ENCODE measurements at regions of chr2 and their contacts with region 1.

Region 1: GRCh38 chr2:9867881-9868280 is 24.6 kb downstream of the TAF1B start:
- DNase-seq: no peak
- ATAC-seq: no peak
- H3K4me3 ChIP-seq: no peak overlapping the region
- H3K27ac ChIP-seq: no peak overlapping the region
- H3K4me1 ChIP-seq: no peaks in the 10 kb centered on the region
- H3K27me3 ChIP-seq: no peaks in the 10 kb centered on the region
- CTCF ChIP-seq: no peak
- EP300 ChIP-seq: no peak
- POLR2A ChIP-seq: no peak
- RAD21 ChIP-seq: no peak

Region 2: DNA sequence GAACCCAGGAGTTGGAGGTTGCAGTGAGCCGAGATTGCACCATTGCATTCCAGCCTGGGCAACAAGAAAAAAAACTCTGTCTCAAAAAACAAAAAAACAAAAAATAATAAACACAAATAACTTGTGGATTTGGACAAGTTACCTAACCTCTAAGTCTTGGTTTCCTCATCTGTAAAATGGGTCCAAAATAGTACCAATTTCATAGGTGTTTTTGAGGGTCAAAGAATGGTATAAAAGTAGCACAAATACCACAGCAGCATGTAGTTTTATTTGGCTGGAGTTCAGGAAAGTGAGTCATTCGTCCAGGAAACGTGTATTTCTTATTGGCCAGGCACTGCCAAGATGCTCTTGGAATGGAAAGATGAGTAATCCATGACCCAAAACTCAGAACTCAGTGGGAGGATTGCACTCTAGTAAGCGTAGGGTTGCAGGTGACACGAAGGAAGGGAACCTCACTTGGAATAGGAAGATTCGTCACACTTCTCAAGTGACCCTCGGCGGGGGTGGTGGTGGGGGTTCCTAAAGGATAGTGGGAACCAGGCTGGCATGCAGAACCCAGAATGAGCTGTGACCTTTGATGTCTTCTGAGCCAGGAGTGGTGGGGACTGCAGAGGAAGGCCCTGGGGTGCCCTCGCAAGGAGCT is 108.0 kb after region 1 on chr2:
- CTCF ChIA-PET with region 1: no interaction called
- POLR2A ChIA-PET with region 1: no interaction called
- in situ Hi-C with region 1: no loop called
- intact Hi-C with region 1: no loop called
- DNase-seq: no peak
- ATAC-seq: no peak
- H3K4me3 ChIP-seq: no peak overlapping the region
- H3K27ac ChIP-seq: no peak overlapping the region
- H3K4me1 ChIP-seq: no peaks in the 10 kb centered on the region
- H3K27me3 ChIP-seq: no peaks in the 10 kb centered on the region
- CTCF ChIP-seq: no peak
- EP300 ChIP-seq: no peak
- POLR2A ChIP-seq: no peak
- RAD21 ChIP-seq: no peak

Region 3: DNA sequence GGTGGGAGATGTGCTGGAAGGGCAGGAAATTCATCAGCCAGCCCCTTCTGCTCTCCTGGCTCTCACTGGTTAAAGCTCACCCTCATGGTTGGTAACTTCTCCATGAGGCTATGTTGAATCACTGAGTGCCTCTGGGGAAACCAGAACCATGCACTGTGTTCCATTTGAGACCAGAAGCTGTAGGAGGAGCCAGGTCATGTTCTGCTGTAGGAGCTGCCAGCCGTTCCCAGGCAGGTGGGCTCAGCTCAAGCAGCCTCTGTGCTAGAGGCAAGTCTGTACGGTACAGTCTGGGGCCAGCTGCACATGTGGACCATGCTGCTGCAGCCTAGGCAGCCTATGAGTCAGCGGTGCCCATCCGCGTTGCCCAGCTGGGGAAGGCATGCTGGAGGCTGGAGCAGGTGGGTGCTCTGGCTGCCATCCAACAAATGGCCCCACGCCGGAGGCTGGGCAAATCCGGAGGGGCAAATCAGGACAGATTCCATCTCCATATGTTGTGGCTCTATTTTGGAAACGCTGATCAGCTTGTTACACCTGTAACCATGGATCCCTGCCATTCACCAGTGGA is 1021.9 kb after region 1 on chr2:
- CTCF ChIA-PET with region 1: no interaction called
- POLR2A ChIA-PET with region 1: no interaction called
- in situ Hi-C with region 1: no loop called
- intact Hi-C with region 1: loop called (anchors 10 kb)
- DNase-seq: no peak
- ATAC-seq: no peak
- H3K4me3 ChIP-seq: no peak overlapping the region
- H3K27ac ChIP-seq: no peak overlapping the region
- H3K4me1 ChIP-seq: peaks cover 11% of the 10 kb centered on the region
- H3K27me3 ChIP-seq: peaks cover 0 to 21% of the 10 kb centered on the region in 2 experiments; a peak in 2 of 5 replicates
- CTCF ChIP-seq: no peak
- EP300 ChIP-seq: no peak
- POLR2A ChIP-seq: no peak
- RAD21 ChIP-seq: no peak